CD4-positive, alpha-beta T cell (primary cell): ENCODE measurements at regions of chr6 and their contacts with region 1.

Region 1: GRCh38 chr6:118893807-118894424 is at the start of gene ASF1A:
- DNase-seq: peak; percentile 92 to 99 (median 95)
- ATAC-seq: peak; percentile 76
- H3K4me3 ChIP-seq: peak within 1 kb of the TSS; percentile 94
- H3K4me3 Mint-ChIP-seq: peak within 1 kb of the TSS; percentile 99
- H3K27ac ChIP-seq: peak within 1 kb of the TSS; percentile 91 to 93
- H3K27ac Mint-ChIP-seq: peak within 1 kb of the TSS; percentile 98
- H3K4me1 ChIP-seq: peaks cover 36% of the 10 kb centered on the region
- H3K4me1 Mint-ChIP-seq: peaks cover 80% of the 10 kb centered on the region
- H3K27me3 ChIP-seq: no peaks in the 10 kb centered on the region
- H3K27me3 Mint-ChIP-seq: no peaks in the 10 kb centered on the region
- CTCF ChIP-seq: peak; percentile 17
- total RNA-seq, gene ASF1A: 10.7 to 11.9 TPM

Region 2: DNA sequence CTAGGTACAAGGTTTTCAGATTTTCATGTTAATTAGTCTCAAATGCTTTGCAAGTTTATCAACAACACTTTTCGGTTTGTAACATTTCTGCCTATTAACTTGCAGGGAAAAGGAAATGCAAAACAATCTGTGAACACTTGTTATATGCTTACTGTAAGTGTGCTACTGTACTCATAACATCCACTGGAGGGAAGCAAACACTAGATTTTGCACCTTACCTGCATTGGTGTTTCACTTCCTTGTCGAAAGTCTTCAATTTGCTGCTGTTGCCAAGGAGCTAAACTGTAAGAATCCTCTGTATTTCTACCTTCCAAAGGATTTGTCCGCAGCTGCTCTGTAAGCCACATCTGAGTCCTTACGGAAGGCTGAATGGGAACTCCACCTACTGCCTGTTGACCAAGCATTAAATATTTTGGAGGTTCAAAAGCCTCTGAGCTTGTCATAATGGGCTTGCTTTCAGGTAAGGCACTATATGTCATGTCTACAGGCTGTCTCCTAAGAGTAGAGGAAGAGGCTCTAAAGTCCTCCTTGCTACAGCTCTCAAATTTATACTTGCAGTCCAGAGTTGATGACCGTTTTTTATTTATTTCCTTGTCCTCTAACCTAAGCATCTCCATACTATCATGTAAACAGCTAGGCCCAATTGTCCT is 328.5 kb before region 1 on chr6:
- CTCF ChIA-PET with region 1: interaction called, 5 read pairs
- POLR2A ChIA-PET with region 1: interaction called, 12 read pairs
- intact Hi-C with region 1: loop called (anchors 5 to 10 kb)
- DNase-seq: peak in 5 of 14 experiments; percentile 22 to 81 (median 75)
- ATAC-seq: peak; percentile 97
- H3K4me3 ChIP-seq: no peak overlapping the region
- H3K4me3 Mint-ChIP-seq: no peak overlapping the region
- H3K27ac ChIP-seq: peak overlapping the region in 1 of 2 donors; percentile 5
- H3K27ac Mint-ChIP-seq: peak overlapping the region; percentile 72
- H3K4me1 ChIP-seq: peaks cover 7% of the 10 kb centered on the region
- H3K4me1 Mint-ChIP-seq: peaks cover 43% of the 10 kb centered on the region
- H3K27me3 ChIP-seq: no peaks in the 10 kb centered on the region
- H3K27me3 Mint-ChIP-seq: no peaks in the 10 kb centered on the region
- CTCF ChIP-seq: peak; percentile 63

Region 3: DNA sequence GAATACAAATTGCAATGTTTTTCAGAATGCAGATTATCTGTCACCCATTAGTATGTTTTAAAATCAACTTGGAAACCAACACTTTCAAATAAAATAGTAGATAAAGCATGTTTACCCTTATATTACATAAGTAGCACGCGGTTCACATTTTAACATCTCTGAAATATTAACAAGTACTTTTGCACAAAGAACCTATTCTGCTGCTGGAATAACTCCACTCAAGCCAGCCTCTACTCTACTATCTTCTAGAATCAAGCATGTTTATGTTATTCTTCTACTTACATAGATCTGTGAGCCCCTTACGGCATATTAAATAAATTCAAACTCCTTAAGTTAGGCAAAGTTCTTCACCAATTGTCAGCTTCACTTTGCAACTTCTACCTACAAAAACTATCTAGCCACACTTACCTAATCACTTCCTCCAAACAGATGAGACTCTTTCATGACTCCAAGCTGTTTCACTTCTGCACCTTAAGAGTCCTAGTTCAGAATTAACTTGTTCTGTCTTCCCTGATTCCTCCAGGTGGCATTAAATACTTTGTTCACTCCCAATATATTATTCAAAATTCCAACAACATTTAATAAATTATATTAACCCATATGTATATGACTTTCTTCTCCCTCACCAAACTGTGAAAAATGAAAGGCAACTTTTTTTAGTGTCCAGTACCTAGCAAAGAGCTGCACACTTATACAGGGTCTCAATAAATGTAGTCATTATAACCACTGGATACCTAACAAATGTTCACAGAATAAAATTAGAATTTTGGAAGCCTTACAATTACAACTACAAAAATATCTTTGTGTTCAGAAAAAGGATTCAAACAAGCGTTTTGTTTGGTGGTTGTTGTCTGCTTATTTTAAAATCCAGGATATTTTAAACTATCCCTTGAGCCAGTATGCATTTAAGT is 254.6 kb before region 1 on chr6:
- CTCF ChIA-PET with region 1: no interaction called
- POLR2A ChIA-PET with region 1: no interaction called
- intact Hi-C with region 1: no loop called
- DNase-seq: peak in 3 of 14 experiments; percentile 23 to 25 (median 23)
- ATAC-seq: no peak
- H3K4me3 ChIP-seq: no peak overlapping the region
- H3K4me3 Mint-ChIP-seq: peak overlapping the region; percentile 2
- H3K27ac ChIP-seq: no peak overlapping the region
- H3K27ac Mint-ChIP-seq: peak overlapping the region; percentile 3
- H3K4me1 ChIP-seq: peaks cover 7% of the 10 kb centered on the region
- H3K4me1 Mint-ChIP-seq: peaks cover 82% of the 10 kb centered on the region
- H3K27me3 ChIP-seq: no peaks in the 10 kb centered on the region
- H3K27me3 Mint-ChIP-seq: no peaks in the 10 kb centered on the region
- CTCF ChIP-seq: no peak

Region 4: GRCh38 chr6:118800394-118801071 is 93.4 kb before region 1 on chr6:
- CTCF ChIA-PET with region 1: interaction called, 7 read pairs
- POLR2A ChIA-PET with region 1: interaction called, 17 read pairs
- intact Hi-C with region 1: loop called (anchors 2 to 5 kb)
- DNase-seq: peak; percentile 66 to 94 (median 78)
- ATAC-seq: peak; percentile 92
- H3K4me3 ChIP-seq: peak overlapping the region; percentile 11
- H3K4me3 Mint-ChIP-seq: peak overlapping the region; percentile 71
- H3K27ac ChIP-seq: peak overlapping the region; percentile 7
- H3K27ac Mint-ChIP-seq: peak overlapping the region; percentile 83
- H3K4me1 ChIP-seq: peaks cover 32% of the 10 kb centered on the region
- H3K4me1 Mint-ChIP-seq: peaks cover 48% of the 10 kb centered on the region
- H3K27me3 ChIP-seq: no peaks in the 10 kb centered on the region
- H3K27me3 Mint-ChIP-seq: no peaks in the 10 kb centered on the region
- CTCF ChIP-seq: peak; percentile 83

Region 5: DNA sequence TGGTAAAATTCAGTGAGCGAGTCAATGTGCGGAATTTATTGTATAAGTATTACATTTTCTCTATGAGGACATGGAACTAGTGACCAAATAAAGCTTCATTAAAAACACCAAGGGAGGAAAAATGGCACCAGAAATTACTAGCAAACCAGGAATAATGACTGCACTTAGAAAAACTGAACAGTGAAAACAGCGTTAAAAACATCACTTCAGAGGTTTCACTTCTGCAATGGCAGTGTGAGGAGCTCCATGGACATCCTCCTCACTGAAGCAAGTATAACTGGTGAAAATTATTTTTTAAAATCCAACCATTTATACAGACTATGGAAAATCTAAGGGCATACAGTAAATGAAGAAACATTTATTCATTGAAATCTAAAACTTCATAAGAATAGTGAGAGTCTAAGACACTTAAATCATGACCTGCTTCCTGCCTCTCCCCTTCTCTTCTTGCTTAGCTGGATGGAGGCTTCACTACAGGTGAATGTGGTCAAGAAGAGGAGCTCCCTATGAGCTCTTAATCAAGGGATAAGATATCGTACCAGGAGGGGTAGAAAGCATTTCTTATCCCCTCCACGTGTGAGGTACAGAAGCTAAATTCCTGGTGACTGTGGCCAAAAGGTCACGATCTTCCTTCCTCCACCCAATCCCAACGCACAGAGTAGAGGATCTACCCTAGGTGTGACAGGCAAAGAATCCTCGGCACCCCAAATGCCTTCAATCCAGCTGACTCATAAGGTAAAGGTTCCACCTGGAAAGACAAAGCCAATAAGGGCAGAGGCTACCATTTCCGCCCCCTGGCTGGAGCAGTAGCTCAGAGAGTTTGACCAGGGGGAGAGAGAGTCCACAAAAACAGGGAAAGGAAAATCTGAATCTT is 12.2 kb before region 1 on chr6:
- CTCF ChIA-PET with region 1: interaction called, 5 read pairs
- POLR2A ChIA-PET with region 1: interaction called, 58 read pairs
- intact Hi-C with region 1: no loop called
- DNase-seq: no peak
- ATAC-seq: no peak
- H3K4me3 ChIP-seq: no peak overlapping the region
- H3K4me3 Mint-ChIP-seq: peak overlapping the region; percentile 3
- H3K27ac ChIP-seq: no peak overlapping the region
- H3K27ac Mint-ChIP-seq: no peak overlapping the region
- H3K4me1 ChIP-seq: peaks cover 14% of the 10 kb centered on the region
- H3K4me1 Mint-ChIP-seq: peaks cover 82% of the 10 kb centered on the region
- H3K27me3 ChIP-seq: no peaks in the 10 kb centered on the region
- H3K27me3 Mint-ChIP-seq: no peaks in the 10 kb centered on the region
- CTCF ChIP-seq: no peak

Region 6: GRCh38 chr6:119078376-119079282 is 184.7 kb after region 1 on chr6 and contains the start of gene FAM184A:
- CTCF ChIA-PET with region 1: interaction called, 8 read pairs
- POLR2A ChIA-PET with region 1: interaction called, 29 read pairs
- intact Hi-C with region 1: loop called (anchors 2 to 5 kb)
- DNase-seq: peak; percentile 51 to 92 (median 71)
- ATAC-seq: peak; percentile 75
- H3K4me3 ChIP-seq: peak within 1 kb of the TSS; percentile 65
- H3K4me3 Mint-ChIP-seq: peak within 1 kb of the TSS; percentile 91
- H3K27ac ChIP-seq: peak within 1 kb of the TSS; percentile 53 to 58
- H3K27ac Mint-ChIP-seq: peak within 1 kb of the TSS; percentile 90
- H3K4me1 ChIP-seq: peaks cover 25% of the 10 kb centered on the region
- H3K4me1 Mint-ChIP-seq: peaks cover 40% of the 10 kb centered on the region
- H3K27me3 ChIP-seq: no peaks in the 10 kb centered on the region
- H3K27me3 Mint-ChIP-seq: no peaks in the 10 kb centered on the region
- CTCF ChIP-seq: no peak
- total RNA-seq, gene FAM184A: 2.9 to 3.3 TPM